ENCODE measurements at regions of chr6 and their contacts with region 1.

Region 1: DNA sequence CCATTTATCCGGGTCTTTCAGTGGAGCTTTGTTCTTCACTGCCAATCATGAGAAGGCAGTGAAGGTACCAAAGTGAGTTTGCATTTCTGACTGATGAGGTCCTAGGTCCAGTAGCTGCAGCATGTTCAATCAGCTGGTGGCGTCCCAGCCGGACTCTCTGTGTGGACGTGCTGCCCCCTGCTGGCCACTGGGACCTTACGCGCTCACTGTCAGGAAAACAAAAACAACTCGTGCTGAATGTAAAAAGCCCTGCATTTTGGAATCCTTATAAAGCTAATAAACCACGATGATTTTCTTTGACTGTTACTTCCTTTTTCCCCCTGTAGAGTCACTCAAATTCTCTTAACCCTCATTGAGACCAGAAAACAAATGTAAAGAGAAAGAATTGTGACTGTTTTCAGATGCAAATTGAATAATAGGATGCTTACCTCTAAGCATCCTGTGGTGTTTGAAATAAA is 4.9 kb upstream of the CD24 start:
- DNase-seq: peak; percentile 76
- ATAC-seq: peak; percentile 78
- H3K4me3 ChIP-seq: no peak overlapping the region
- H3K27ac ChIP-seq: no peak overlapping the region
- H3K4me1 ChIP-seq: no peaks in the 10 kb centered on the region
- H3K27me3 ChIP-seq: peaks cover 11% of the 10 kb centered on the region
- CTCF ChIP-seq: peak; percentile 99

Region 2: GRCh38 chr6:106444777-106445507 is 534.5 kb before region 1 on chr6:
- CTCF ChIA-PET with region 1: no interaction called
- POLR2A ChIA-PET with region 1: no interaction called
- in situ Hi-C with region 1: no loop called
- intact Hi-C with region 1: loop called (anchors 5 kb)
- DNase-seq: peak; percentile 57
- ATAC-seq: peak; percentile 89
- H3K4me3 ChIP-seq: no peak overlapping the region
- H3K27ac ChIP-seq: no peak overlapping the region
- H3K4me1 ChIP-seq: no peaks in the 10 kb centered on the region
- H3K27me3 ChIP-seq: peaks cover 28% of the 10 kb centered on the region; the same call in 1 of the 2 replicates
- CTCF ChIP-seq: peak; percentile 85

Region 3: GRCh38 chr6:106608062-106608668 is 371.3 kb before region 1 on chr6:
- CTCF ChIA-PET with region 1: interaction called, 19 read pairs
- POLR2A ChIA-PET with region 1: no interaction called
- in situ Hi-C with region 1: no loop called
- intact Hi-C with region 1: loop called (anchors 2 kb)
- DNase-seq: peak; percentile 56
- ATAC-seq: peak; percentile 82; the same call in 1 of the 2 replicates
- H3K4me3 ChIP-seq: no peak overlapping the region
- H3K27ac ChIP-seq: no peak overlapping the region
- H3K4me1 ChIP-seq: no peaks in the 10 kb centered on the region
- H3K27me3 ChIP-seq: no peaks in the 10 kb centered on the region
- CTCF ChIP-seq: peak; percentile 74

Region 4: DNA sequence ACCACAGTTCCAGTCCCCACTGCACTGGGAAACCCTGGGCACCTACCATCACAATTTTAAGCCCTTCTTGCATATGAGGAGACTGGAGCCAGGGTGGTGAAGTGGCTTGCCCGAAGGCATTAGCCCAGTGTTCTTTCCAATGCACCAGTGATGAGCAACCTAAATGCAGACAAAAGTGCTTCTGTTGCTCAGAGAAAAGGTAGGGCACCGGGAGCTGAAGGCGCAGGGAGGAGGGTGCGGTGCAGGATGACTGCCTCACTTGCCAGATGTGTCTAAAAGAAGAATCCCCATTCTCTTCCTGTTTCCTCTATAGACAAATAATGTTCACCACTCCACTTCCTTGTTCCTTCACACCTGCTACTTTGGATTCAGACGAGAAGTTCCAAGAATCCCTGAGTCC is 263.5 kb before region 1 on chr6:
- CTCF ChIA-PET with region 1: no interaction called
- POLR2A ChIA-PET with region 1: interaction called, 10 read pairs
- in situ Hi-C with region 1: no loop called
- intact Hi-C with region 1: no loop called
- DNase-seq: no peak
- ATAC-seq: no peak
- H3K4me3 ChIP-seq: no peak overlapping the region
- H3K27ac ChIP-seq: no peak overlapping the region
- H3K4me1 ChIP-seq: no peaks in the 10 kb centered on the region
- H3K27me3 ChIP-seq: peaks cover 15% of the 10 kb centered on the region
- CTCF ChIP-seq: no peak

Region 5: DNA sequence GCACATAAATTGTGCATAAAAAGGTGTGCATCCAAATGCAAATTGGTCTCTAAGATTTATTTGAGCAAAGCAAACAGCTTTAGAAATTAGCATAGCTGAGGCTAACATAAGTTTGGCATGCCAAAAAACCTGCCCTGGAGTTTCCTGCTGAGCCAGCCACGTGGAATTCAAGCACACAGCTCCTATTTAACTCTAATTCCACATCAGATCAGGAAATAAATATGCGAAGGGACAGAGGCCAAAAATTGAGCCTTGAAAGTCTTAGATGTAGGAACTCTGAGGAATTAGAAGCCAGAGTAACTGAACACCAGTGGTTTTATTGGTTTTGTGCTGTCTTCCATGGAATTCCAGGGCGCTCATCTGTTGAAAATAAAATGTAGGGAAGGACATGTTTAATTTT is 530.0 kb after region 1 on chr6:
- CTCF ChIA-PET with region 1: no interaction called
- POLR2A ChIA-PET with region 1: no interaction called
- in situ Hi-C with region 1: no loop called
- intact Hi-C with region 1: no loop called
- DNase-seq: no peak
- ATAC-seq: no peak
- H3K4me3 ChIP-seq: no peak overlapping the region
- H3K27ac ChIP-seq: no peak overlapping the region
- H3K4me1 ChIP-seq: 0 out of 2 replicates have a peak, but pooled peaks cover 5% of the 10 kb centered on the region
- H3K27me3 ChIP-seq: no peaks in the 10 kb centered on the region
- CTCF ChIP-seq: no peak